ENCODE measurements at regions of chr10 and their contacts with region 1.

Region 1: DNA sequence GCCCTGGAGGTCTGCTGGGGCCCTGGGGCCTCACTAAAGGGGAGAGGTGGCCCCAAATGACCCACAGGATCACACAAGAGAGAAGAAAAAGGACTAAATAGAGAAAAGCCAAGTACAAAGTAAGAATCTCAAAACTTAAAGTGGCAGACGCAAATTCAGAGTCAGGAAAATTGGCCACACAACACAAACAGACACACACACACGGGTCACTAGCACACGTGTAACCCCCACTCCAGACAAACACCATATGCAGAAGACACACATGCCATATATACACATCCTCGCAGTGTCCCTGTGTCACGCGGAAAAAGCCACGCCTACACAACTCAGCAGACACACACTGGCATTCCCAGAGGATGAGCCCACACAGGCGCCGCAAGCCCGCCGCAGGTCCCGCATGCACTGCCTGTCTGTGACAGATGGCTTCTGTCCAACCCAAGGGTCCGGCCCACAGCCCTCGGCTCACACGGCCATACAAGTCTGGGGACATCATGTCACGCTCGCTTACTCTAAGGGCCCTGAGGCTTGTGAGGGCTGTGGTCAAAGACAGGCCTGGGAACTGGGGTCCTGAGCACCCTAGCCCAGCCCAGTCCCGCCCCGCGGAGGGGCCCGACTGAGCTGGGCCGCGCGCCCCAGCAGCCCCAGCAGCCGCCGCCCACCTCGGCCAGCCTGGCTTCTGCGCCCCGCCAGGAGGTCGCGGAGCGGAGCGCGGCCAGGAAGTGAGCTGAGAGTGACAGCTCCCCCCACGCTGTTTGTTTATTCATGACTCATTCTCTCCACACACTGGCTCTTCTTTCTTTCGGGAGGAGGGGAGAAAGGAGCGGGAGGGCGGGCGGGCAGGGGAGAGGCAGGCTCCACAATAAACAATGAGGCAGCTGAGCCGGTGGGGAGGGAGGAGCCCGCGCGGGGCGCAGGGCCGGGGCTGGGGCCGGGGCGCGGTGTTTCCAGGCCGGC is 95.5 kb upstream of the ZMIZ1 start:
- DNase-seq: peak; percentile 100
- ATAC-seq: peak; percentile 63
- H3K4me3 ChIP-seq: peak overlapping the region; percentile 60
- H3K27ac ChIP-seq: peak overlapping the region; percentile 79
- H3K4me1 ChIP-seq: peaks cover 39% of the 10 kb centered on the region
- H3K27me3 ChIP-seq: no peaks in the 10 kb centered on the region
- CTCF ChIP-seq: peak; percentile 20; the same call in 1 of the 2 replicates

Region 2: DNA sequence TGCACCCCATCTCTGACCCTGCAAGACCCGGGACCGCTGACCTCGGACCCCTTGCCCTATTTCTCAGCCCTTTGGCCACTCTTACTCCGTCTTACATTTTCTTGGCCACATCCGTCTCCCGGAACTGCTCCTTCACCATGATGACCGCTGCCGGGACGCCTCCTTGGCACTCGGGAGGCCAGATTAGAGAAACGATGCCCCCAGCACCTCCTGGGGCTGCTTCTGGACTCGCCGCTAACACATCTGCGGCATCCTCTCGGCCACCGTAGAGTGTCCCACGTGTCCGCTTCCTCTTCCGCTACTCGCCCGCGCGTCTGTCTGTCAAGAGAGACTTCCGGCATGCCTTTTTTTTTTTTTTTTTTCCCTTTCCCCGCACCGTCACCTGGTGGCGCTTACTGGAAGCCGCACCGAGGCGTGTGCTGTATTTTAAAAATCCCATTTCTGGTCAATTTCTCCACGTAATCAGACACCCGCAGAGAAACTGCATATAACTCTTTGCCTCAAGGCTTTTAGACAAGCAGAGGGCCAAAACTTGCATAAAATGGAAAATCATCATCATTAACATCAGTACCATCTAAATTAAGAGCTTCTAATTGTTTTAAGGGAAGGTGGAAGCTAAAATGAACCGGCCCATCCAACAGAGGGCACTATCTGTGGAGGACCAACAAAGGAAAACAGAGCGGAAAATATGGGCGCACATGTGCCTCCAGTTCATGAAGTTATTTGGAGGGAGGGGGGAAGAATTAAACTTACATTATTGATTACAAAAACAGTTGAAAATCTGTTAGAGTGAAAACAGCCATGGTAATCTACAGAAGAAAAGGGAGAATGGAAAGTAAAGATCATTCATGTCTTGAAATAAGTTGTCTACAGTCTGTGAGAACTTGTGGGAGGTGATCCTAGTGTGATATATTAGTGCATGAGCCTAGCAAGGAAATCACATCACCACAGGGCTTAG is 943.7 kb before region 1 on chr10 and contains the start of gene POLR3A:
- CTCF ChIA-PET with region 1: no interaction called
- POLR2A ChIA-PET with region 1: no interaction called
- intact Hi-C with region 1: loop called (anchors 1 kb)
- DNase-seq: peak; percentile 100
- ATAC-seq: peak; percentile 48
- H3K4me3 ChIP-seq: peak within 1 kb of the TSS; percentile 69
- H3K27ac ChIP-seq: peak within 1 kb of the TSS; percentile 23
- H3K4me1 ChIP-seq: peaks cover 47% of the 10 kb centered on the region
- H3K27me3 ChIP-seq: no peaks in the 10 kb centered on the region
- CTCF ChIP-seq: peak; percentile 100
- total RNA-seq, gene POLR3A: 97.0 and 97.2 TPM in 2 replicates

Region 3: DNA sequence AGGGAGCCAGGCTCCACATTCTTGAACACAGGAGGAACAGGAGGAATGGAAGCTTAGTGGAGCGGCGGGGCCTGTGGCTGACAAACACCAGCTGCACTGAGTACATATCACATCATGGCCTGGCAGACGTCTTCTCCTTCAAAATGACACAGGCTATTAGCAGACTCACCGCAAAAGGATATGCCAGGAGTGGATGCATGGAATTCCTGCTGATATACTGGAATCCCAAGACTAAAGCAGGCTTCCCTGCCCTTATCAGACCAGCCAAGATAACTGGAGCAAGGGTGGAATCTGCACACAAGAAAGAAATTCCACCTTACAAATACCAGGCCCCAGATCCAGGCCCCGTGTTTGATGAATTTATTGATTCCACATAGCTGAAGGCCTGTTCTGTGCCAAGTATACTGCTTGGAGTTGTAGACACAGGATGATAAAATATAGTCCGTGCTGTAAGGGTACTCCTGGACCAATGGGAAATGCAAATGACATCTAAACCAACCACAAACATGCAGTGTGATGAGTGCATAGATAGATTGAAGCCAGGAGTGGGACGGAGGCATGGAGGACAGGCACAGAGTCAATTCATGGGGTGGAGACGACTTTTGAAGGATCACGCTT is 384.9 kb before region 1 on chr10:
- CTCF ChIA-PET with region 1: interaction called, 14 read pairs
- POLR2A ChIA-PET with region 1: no interaction called
- intact Hi-C with region 1: no loop called
- DNase-seq: no peak
- ATAC-seq: no peak
- H3K4me3 ChIP-seq: no peak overlapping the region
- H3K27ac ChIP-seq: no peak overlapping the region
- H3K4me1 ChIP-seq: no peaks in the 10 kb centered on the region
- H3K27me3 ChIP-seq: peaks cover 48% of the 10 kb centered on the region
- CTCF ChIP-seq: no peak

Region 4: GRCh38 chr10:78774999-78775711 is 198.1 kb before region 1 on chr10:
- CTCF ChIA-PET with region 1: interaction called, 13 read pairs
- POLR2A ChIA-PET with region 1: no interaction called
- intact Hi-C with region 1: no loop called
- DNase-seq: no peak
- ATAC-seq: no peak
- H3K4me3 ChIP-seq: no peak overlapping the region
- H3K27ac ChIP-seq: no peak overlapping the region
- H3K4me1 ChIP-seq: peaks cover 20% of the 10 kb centered on the region
- H3K27me3 ChIP-seq: no peaks in the 10 kb centered on the region
- CTCF ChIP-seq: peak; percentile 41; the same call in 1 of the 2 replicates

Region 5: DNA sequence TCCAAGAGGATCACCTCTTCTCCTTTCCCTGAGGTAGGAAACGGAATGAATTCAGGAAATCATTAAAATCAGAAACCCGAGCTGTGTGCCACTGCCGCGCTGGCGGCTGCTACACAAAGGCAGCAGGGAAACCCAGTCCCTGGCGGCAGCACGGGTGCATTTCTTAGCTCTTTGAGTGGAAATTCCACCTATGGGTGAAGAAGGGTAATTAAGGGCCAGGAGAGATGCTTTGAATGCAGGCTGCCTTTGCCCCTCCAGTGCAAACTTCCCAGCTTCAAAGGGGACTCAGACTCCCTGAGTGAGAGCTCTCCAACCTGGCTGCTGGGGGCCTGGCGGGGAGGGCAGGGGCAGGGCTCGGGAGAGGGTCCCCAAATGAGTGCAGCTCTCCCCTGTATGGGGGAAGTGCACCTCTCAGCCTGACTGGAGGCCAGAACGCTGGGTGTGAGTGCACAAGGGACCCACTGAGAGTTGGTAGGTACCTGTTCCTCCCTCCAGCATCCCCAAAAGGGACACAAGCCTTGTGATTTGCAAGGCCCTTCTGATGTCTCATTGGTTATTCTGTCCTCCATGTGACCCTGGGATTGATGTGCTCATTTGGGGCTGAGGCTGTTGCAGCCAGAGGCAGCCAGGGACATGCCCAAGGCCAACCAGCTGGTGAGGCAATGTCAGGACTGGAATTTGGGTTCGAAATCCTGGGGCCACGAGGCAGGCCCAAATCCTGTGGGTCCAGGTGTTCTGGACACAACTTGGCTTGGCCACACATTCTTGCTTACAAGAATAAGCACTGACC is 79.3 kb after region 1 on chr10:
- CTCF ChIA-PET with region 1: interaction called, 8 read pairs
- POLR2A ChIA-PET with region 1: no interaction called
- intact Hi-C with region 1: loop called (anchors 1 kb)
- DNase-seq: peak; percentile 89
- ATAC-seq: peak; percentile 75
- H3K4me3 ChIP-seq: no peak overlapping the region
- H3K27ac ChIP-seq: no peak overlapping the region
- H3K4me1 ChIP-seq: peaks cover 27% of the 10 kb centered on the region
- H3K27me3 ChIP-seq: no peaks in the 10 kb centered on the region
- CTCF ChIP-seq: peak; percentile 91

Region 6: DNA sequence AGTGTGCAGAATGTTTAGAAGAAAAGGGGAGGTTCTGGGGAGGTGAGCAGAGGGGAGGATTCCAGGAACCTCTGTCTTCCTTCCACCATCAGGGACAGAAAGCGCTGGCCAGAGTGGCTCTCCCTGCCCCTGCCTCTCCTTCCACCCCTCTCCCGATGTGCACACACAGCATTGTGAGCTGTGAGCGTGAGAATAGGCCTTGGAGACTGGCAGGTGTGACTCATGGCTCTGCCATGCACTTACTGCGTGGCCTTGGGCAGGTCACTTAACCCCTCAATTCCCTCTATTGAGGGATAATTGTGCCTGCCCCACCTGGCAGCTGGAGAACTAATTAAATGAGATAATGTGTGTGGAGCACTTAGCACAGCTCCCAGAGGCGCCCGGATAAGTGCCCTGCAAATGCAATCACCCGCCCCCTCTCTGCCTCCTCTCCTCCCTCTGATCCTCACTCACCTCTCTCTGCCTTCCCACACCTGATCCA is 211.0 kb after region 1 on chr10:
- CTCF ChIA-PET with region 1: interaction called, 3 read pairs
- POLR2A ChIA-PET with region 1: no interaction called
- intact Hi-C with region 1: loop called (anchors 2 kb)
- DNase-seq: peak; percentile 100
- ATAC-seq: peak; percentile 95
- H3K4me3 ChIP-seq: peak overlapping the region; percentile 2; the same call in 1 of the 2 replicates
- H3K27ac ChIP-seq: peak overlapping the region; percentile 67
- H3K4me1 ChIP-seq: peaks cover 35% of the 10 kb centered on the region
- H3K27me3 ChIP-seq: no peaks in the 10 kb centered on the region
- CTCF ChIP-seq: no peak

Region 7: GRCh38 chr10:79445141-79445976 is 472.1 kb after region 1 on chr10 and contains the start of gene ZCCHC24:
- CTCF ChIA-PET with region 1: no interaction called
- POLR2A ChIA-PET with region 1: no interaction called
- intact Hi-C with region 1: loop called (anchors 5 kb)
- DNase-seq: peak; percentile 100
- ATAC-seq: peak; percentile 78
- H3K4me3 ChIP-seq: peak within 1 kb of the TSS; percentile 70
- H3K27ac ChIP-seq: peak within 1 kb of the TSS; percentile 15
- H3K4me1 ChIP-seq: peaks cover 59% of the 10 kb centered on the region
- H3K27me3 ChIP-seq: no peaks in the 10 kb centered on the region
- CTCF ChIP-seq: no peak
- total RNA-seq, gene ZCCHC24: 32.9 and 40.7 TPM in 2 replicates